RWPE1 (cell line): ENCODE measurements at regions of chr1 and their contacts with region 1.

Region 1: GRCh38 chr1:24201941-24202440 is 14.9 kb upstream of the IFNLR1 start:
- DNase-seq: peak; percentile 74
- H3K27ac ChIP-seq: peak overlapping the region; percentile 75
- CTCF ChIP-seq: peak; percentile 73

Region 2: GRCh38 chr1:24311741-24312140 is 109.8 kb after region 1 on chr1:
- CTCF ChIA-PET with region 1: interaction called, 11 read pairs
- POLR2A ChIA-PET with region 1: interaction called, 3 read pairs
- DNase-seq: no peak
- H3K27ac ChIP-seq: peak overlapping the region; percentile 11; the same call in 1 of the 2 replicates
- CTCF ChIP-seq: no peak